Caco-2 (cell line): ENCODE measurements at regions of chr7 and their contacts with region 1.

Region 1: GRCh38 chr7:150778738-150779301 is 21.3 kb downstream of the TMEM176B start:
- DNase-seq: peak; percentile 80 to 87
- H3K4me3 ChIP-seq: no peak overlapping the region
- H3K4me3 Mint-ChIP-seq: no peak overlapping the region
- H3K27ac Mint-ChIP-seq: no peak overlapping the region
- H3K4me1 ChIP-seq: peaks cover 4% of the 10 kb centered on the region
- H3K4me1 Mint-ChIP-seq: peaks cover 7% of the 10 kb centered on the region
- H3K27me3 ChIP-seq: no peaks in the 10 kb centered on the region
- H3K27me3 Mint-ChIP-seq: peaks cover 3% of the 10 kb centered on the region
- CTCF ChIP-seq: peak; percentile 86 to 90

Region 2: DNA sequence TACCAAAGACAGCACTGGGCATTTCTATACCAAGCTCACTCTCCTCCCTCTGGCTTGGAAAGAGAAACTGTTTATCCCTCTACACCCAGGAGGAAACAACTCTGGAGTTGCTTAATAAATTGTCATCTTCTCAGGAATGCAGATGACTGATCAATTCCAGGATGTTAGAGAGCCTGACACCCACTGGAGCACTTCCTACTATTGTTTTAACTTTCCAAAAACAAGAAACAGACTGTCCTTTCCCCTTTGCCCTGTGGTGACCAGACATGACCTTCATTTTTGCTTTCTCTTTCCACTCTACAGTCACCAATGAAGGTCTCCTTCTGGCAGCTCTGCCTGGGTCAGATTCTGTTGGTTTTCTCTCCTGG is 192.1 kb before region 1 on chr7:
- CTCF ChIA-PET with region 1: no interaction called
- POLR2A ChIA-PET with region 1: no interaction called
- intact Hi-C with region 1: no loop called
- DNase-seq: no peak
- H3K4me3 ChIP-seq: no peak overlapping the region
- H3K4me3 Mint-ChIP-seq: no peak overlapping the region
- H3K27ac Mint-ChIP-seq: no peak overlapping the region
- H3K4me1 ChIP-seq: no peaks in the 10 kb centered on the region
- H3K4me1 Mint-ChIP-seq: no peaks in the 10 kb centered on the region
- H3K27me3 ChIP-seq: no peaks in the 10 kb centered on the region
- H3K27me3 Mint-ChIP-seq: peaks cover 6% of the 10 kb centered on the region
- CTCF ChIP-seq: no peak

Region 3: DNA sequence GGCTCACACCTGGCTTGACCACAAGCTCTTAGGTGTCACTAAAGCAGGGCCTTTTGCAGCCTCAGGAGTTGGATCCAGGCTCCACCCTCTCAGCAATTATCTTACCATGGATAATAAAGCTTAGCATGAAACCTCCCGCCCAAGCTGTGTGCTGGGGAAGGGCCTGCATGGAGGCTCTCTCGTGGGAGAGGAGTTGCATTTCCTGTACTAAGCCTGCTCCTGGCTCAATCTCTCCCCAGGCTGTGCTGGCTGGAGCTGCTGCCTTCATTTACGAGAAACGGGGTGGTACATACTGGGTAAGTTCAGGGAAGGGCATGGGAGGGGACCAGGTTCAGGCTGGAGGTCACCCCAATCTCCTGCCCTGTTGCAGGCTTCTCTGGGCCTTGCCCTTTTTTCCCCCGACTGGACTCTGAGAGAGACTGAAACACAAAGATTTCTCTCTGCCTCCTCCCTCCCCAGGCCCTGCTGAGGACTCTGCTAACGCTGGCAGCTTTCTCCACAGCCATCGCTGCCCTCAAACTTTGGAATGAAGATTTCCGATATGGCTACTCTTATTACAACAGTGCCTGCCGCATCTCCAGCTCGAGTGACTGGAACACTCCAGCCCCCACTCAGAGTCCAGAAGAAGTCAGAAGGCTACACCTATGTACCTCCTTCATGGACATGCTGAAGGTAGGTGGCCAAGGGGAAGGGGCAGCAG is 24.5 kb after region 1 on chr7:
- CTCF ChIA-PET with region 1: no interaction called
- POLR2A ChIA-PET with region 1: no interaction called
- intact Hi-C with region 1: loop called (anchors 2 kb)
- DNase-seq: no peak
- H3K4me3 ChIP-seq: no peak overlapping the region
- H3K4me3 Mint-ChIP-seq: no peak overlapping the region
- H3K27ac Mint-ChIP-seq: no peak overlapping the region
- H3K4me1 ChIP-seq: peaks cover 20% of the 10 kb centered on the region
- H3K4me1 Mint-ChIP-seq: peaks cover 3% of the 10 kb centered on the region
- H3K27me3 ChIP-seq: no peaks in the 10 kb centered on the region
- H3K27me3 Mint-ChIP-seq: peaks cover 5% of the 10 kb centered on the region
- CTCF ChIP-seq: no peak

Region 4: GRCh38 chr7:150830937-150831336 is 52.1 kb after region 1 on chr7:
- CTCF ChIA-PET with region 1: no interaction called
- POLR2A ChIA-PET with region 1: interaction called, 6 read pairs
- intact Hi-C with region 1: loop called (anchors 2 kb)
- DNase-seq: peak; percentile 84 to 92
- H3K4me3 ChIP-seq: no peak overlapping the region
- H3K4me3 Mint-ChIP-seq: peak overlapping the region; percentile 30
- H3K27ac Mint-ChIP-seq: peak overlapping the region; percentile 51
- H3K4me1 ChIP-seq: peaks cover 20% of the 10 kb centered on the region
- H3K4me1 Mint-ChIP-seq: peaks cover 20% of the 10 kb centered on the region
- H3K27me3 ChIP-seq: no peaks in the 10 kb centered on the region
- H3K27me3 Mint-ChIP-seq: no peaks in the 10 kb centered on the region
- CTCF ChIP-seq: no peak

Region 5: DNA sequence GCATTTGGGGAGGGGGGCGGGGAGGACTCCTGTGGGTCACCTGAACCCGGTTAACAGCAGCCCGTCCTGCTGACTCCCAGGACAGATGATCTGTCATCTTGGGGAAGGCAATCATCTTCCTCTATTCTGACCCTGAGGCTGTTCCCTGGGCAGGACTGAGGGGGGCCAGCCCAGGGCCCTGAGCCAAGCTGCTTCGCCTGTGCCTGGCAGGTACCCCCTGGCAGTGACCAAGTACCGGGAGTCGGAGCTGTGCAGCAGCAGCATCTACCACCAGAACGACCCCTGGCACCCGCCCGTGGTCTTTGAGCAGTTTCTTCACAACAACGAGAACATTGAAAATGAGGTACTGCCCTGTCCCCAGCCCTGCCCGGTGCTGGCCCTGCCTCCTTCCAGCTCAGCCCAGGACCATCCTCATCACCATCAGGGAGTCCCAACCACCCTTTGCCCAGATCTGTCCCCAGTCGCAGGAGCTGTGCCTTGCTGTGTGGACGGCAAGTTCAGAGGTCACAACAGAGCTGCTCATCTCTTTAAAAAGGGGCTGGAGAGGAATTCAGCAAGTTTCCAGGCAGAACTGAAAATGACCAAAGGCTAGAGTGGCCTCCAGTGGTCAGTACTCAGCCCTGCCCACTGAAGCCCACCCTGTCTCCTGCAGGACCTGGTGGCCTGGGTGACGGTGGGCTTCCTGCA is 81.6 kb after region 1 on chr7:
- CTCF ChIA-PET with region 1: interaction called, 5 read pairs
- POLR2A ChIA-PET with region 1: no interaction called
- intact Hi-C with region 1: loop called (anchors 1 kb)
- DNase-seq: peak in 1 of 2 experiments; percentile 22
- H3K4me3 ChIP-seq: no peak overlapping the region
- H3K4me3 Mint-ChIP-seq: no peak overlapping the region
- H3K27ac Mint-ChIP-seq: no peak overlapping the region
- H3K4me1 ChIP-seq: no peaks in the 10 kb centered on the region
- H3K4me1 Mint-ChIP-seq: peaks cover 6% of the 10 kb centered on the region
- H3K27me3 ChIP-seq: no peaks in the 10 kb centered on the region
- H3K27me3 Mint-ChIP-seq: no peaks in the 10 kb centered on the region
- CTCF ChIP-seq: peak in 1 of 2 experiments; percentile 40

Region 6: DNA sequence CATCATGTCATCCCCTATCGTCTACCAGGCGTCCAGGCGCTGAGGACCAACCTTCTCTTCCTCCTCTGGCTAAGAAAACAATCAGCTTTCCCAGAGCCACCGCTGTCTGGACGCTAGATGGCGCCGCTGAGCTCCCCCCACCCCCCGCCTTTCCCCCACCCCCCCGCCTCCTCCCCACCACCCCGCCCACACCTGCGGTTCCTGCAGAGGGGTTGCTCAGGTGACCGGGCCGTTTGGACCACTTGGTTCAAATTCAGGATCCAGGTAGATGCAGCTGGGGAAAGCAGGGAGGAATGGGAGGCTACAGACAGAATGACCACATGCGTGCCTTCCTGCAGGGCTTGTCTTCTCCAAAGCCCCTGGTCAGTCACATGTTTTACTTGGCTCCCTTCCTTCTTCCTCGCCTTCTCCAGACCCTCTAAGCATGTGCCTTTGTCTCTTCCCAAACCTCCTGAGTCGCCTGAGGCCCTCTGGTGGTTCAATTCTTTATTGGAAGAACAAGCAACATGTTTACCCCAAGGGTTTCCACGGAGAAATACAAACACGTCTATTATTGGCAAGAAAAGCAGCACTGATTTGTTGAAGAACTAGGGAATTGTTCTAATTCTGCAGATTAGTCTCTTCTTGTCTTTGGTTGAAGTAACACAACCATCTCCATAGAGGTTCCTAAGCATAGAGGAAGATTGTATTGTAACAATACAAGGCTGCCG is 98.2 kb after region 1 on chr7:
- CTCF ChIA-PET with region 1: interaction called, 9 read pairs
- POLR2A ChIA-PET with region 1: no interaction called
- intact Hi-C with region 1: loop called (anchors 1 kb)
- DNase-seq: peak; percentile 82 to 83
- H3K4me3 ChIP-seq: peak overlapping the region; percentile 29
- H3K4me3 Mint-ChIP-seq: peak overlapping the region; percentile 80
- H3K27ac Mint-ChIP-seq: peak overlapping the region; percentile 77
- H3K4me1 ChIP-seq: peaks cover 8% of the 10 kb centered on the region
- H3K4me1 Mint-ChIP-seq: no peaks in the 10 kb centered on the region
- H3K27me3 ChIP-seq: no peaks in the 10 kb centered on the region
- H3K27me3 Mint-ChIP-seq: peaks cover 9% of the 10 kb centered on the region
- CTCF ChIP-seq: peak; percentile 61 to 79

Region 7: GRCh38 chr7:150988230-150989226 is 209.7 kb after region 1 on chr7:
- CTCF ChIA-PET with region 1: no interaction called
- POLR2A ChIA-PET with region 1: no interaction called
- intact Hi-C with region 1: loop called (anchors 5 kb)
- DNase-seq: peak in 1 of 2 experiments; percentile 39
- H3K4me3 ChIP-seq: no peak overlapping the region
- H3K4me3 Mint-ChIP-seq: no peak overlapping the region
- H3K27ac Mint-ChIP-seq: no peak overlapping the region
- H3K4me1 ChIP-seq: no peaks in the 10 kb centered on the region
- H3K4me1 Mint-ChIP-seq: no peaks in the 10 kb centered on the region
- H3K27me3 ChIP-seq: no peaks in the 10 kb centered on the region; the same call in 1 of the 2 replicates
- H3K27me3 Mint-ChIP-seq: no peaks in the 10 kb centered on the region
- CTCF ChIP-seq: peak; percentile 52 to 56